ENCODE measurements at regions of chr13 and their contacts with region 1.

Region 1: DNA sequence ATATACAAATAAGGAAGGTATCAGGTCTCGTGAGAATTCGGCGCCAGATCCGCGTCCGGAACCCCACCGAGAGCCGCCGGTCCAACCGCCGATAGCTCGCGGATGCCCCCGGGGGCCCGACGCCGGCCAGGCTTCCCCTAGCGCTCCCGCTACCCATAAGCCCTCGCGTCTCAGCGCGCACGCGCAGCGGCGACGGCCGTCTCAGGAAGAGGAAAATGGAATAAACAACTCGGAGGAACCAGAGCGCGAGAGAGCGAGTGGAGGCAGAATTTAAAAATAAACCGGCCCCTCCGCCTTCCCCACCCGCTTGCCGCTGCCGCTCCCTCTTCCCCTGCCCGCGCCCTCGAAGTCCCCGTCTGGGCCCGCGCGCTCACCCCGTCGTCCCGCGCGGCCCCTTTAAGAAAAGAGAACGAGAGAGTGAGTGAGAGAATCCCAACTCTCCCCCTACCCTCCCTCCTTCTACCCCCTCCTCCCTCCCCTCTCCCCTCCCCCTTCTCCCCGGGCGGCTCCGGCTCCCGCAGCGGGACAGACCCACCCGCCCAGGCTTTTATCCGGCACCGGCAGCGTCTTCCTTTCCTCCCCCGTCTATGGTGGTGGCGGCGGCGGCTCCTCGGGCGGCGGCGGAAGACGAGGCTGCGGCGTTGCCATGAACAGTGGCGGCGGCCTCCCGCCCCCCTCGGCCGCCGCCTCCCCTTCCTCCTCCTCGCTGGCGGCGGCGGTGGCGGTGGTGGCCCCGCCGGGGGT is at the start of gene PAN3:
- DNase-seq: peak; percentile 95
- ATAC-seq: peak; percentile 67
- H3K4me3 Mint-ChIP-seq: peak within 1 kb of the TSS; percentile 95
- H3K27ac Mint-ChIP-seq: peak within 1 kb of the TSS; percentile 98
- H3K4me1 Mint-ChIP-seq: peaks cover 53% of the 10 kb centered on the region
- H3K27me3 Mint-ChIP-seq: no peaks in the 10 kb centered on the region
- CTCF ChIP-seq: no peak
- total RNA-seq, gene PAN3: 60.7 and 68.2 TPM in 2 replicates

Region 2: DNA sequence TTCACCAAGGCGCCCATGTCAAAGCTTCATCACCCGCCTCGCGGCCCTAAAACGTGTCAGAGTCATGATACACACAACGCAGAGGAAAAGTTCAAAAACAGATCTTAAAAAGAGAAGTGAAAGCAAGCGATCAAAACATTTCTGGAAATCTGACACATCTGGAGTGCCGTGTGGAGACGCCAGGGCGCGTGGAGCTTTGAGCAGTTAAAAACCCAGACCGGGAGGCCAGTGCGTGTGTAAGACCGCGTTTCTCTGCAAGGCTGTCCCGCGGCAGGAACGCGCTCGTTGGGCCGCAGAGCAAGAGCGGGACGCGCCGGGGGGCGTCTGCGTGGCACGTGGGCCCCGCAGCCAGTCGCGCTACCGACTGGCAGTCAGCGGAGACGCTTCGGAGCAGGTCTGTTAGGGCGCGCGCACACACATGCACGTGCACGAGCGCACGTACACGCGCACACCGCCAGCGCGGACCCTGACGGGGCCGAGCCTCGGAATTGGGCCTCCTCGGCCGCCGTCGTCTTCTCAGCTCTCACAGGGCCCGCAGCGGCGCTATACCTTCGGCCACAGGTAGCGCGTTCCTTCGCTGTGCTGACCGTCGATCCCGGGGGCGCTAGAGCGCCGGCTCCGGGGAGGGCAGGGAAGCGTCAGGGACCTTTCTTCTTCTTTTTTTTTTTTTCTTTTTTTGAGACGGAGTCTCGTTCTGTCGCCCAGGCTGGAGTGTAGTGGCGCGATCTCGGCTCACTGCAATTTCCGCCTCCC is 1951.9 kb before region 1 on chr13:
- CTCF ChIA-PET with region 1: no interaction called
- POLR2A ChIA-PET with region 1: no interaction called
- intact Hi-C with region 1: loop called (anchors 10 kb)
- DNase-seq: peak; percentile 94
- ATAC-seq: peak; percentile 84
- H3K4me3 Mint-ChIP-seq: peak overlapping the region; percentile 87
- H3K27ac Mint-ChIP-seq: peak overlapping the region; percentile 91
- H3K4me1 Mint-ChIP-seq: peaks cover 48% of the 10 kb centered on the region
- H3K27me3 Mint-ChIP-seq: no peaks in the 10 kb centered on the region
- CTCF ChIP-seq: no peak

Region 3: GRCh38 chr13:27424246-27425157 is 713.7 kb before region 1 on chr13 and contains the start of gene GTF3A:
- CTCF ChIA-PET with region 1: no interaction called
- POLR2A ChIA-PET with region 1: no interaction called
- intact Hi-C with region 1: loop called (anchors 1 kb)
- DNase-seq: peak; percentile 91
- ATAC-seq: peak; percentile 72
- H3K4me3 Mint-ChIP-seq: peak within 1 kb of the TSS; percentile 79
- H3K27ac Mint-ChIP-seq: peak within 1 kb of the TSS; percentile 86
- H3K4me1 Mint-ChIP-seq: peaks cover 42% of the 10 kb centered on the region
- H3K27me3 Mint-ChIP-seq: no peaks in the 10 kb centered on the region
- CTCF ChIP-seq: no peak
- total RNA-seq, gene GTF3A: 119 and 134 TPM in 2 replicates

Region 4: GRCh38 chr13:28012896-28013295 is 125.3 kb before region 1 on chr13:
- CTCF ChIA-PET with region 1: no interaction called
- POLR2A ChIA-PET with region 1: interaction called, 3 read pairs
- intact Hi-C with region 1: loop called (anchors 5 kb)
- DNase-seq: no peak
- ATAC-seq: peak; percentile 80
- H3K4me3 Mint-ChIP-seq: no peak overlapping the region
- H3K27ac Mint-ChIP-seq: peak overlapping the region; percentile 3
- H3K4me1 Mint-ChIP-seq: peaks cover 15% of the 10 kb centered on the region
- H3K27me3 Mint-ChIP-seq: no peaks in the 10 kb centered on the region
- CTCF ChIP-seq: no peak

Region 5: DNA sequence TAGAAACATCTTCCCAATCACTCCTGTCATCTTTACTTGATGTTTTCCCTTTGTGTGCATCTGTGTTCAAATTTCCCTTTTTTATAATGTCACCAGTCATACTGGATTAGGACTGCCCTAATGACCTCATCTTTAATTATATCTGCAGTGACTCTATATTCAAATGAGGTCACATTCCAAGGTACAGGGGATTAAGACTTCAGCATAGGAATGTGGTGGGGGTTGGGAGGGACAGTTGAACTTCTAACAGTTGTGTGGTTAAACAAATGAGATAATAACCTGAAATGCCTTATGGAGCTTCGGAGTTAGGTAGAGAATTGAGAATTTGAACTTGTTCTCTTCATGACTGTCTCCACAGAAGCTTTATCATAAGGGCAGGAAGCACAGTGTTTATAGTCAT is 23.2 kb after region 1 on chr13:
- CTCF ChIA-PET with region 1: no interaction called
- POLR2A ChIA-PET with region 1: interaction called, 3 read pairs
- intact Hi-C with region 1: loop called (anchors 2 kb)
- DNase-seq: no peak
- ATAC-seq: no peak
- H3K4me3 Mint-ChIP-seq: no peak overlapping the region
- H3K27ac Mint-ChIP-seq: no peak overlapping the region
- H3K4me1 Mint-ChIP-seq: peaks cover 68% of the 10 kb centered on the region
- H3K27me3 Mint-ChIP-seq: no peaks in the 10 kb centered on the region
- CTCF ChIP-seq: no peak

Region 6: DNA sequence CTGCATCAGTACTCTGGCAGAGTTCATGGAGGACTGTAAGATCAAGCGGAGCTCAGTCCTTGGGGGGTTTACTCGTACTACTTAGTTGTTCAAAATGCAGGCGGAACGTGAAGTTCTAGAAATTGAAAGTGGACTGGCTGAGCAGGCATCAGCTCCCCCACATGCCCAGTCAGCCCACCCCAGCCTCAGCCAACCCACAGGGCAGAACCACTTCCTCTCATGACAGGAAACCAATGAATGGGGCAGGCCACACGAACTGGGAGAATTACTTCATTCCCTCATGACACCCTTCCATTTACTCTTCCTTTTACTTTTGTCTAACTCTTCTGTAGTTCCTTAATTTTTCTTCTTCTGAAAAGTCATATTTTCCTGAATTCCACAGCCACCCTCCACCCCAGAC is 284.8 kb after region 1 on chr13:
- CTCF ChIA-PET with region 1: no interaction called
- POLR2A ChIA-PET with region 1: no interaction called
- intact Hi-C with region 1: loop called (anchors 5 kb)
- DNase-seq: peak; percentile 48
- ATAC-seq: peak; percentile 99
- H3K4me3 Mint-ChIP-seq: peak overlapping the region; percentile 76
- H3K27ac Mint-ChIP-seq: peak overlapping the region; percentile 85
- H3K4me1 Mint-ChIP-seq: peaks cover 28% of the 10 kb centered on the region
- H3K27me3 Mint-ChIP-seq: no peaks in the 10 kb centered on the region
- CTCF ChIP-seq: no peak

Region 7: DNA sequence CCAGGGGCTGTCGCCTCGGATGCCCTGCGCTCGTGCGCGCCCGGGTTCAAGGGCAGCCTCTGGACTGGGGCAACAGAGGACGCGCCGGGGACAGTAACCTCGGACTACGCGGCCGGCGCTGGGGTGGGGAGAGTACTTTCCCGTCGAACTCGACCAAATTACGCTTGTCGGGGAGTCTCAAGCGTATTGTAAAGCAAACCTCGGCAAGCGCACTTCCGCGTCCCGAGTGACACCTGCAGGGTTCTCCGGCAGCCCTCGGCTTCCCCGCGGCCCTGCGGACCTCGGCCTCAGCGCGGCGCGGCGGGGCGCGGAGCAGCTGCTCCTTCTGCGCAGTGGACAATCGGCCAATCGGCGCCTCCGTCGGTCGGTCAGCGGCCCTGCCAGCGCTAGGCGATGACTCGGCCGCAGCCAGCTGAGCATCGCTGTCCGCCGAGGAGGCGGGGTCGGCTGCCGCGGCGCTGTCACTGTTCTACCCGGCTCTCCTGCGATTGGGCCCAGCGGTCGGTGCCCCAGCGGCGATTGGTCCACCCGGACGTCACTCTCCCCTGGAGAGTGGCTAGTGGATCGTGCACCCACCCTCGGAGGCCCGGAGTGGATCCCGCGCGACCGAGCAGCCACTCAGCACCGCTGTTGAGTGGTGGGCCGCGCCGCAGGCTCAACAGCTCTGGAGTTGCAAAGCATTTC is 580.5 kb after region 1 on chr13 and contains the start of gene SLC46A3:
- CTCF ChIA-PET with region 1: no interaction called
- POLR2A ChIA-PET with region 1: no interaction called
- intact Hi-C with region 1: loop called (anchors 1 kb)
- DNase-seq: peak; percentile 95
- ATAC-seq: peak; percentile 98
- H3K4me3 Mint-ChIP-seq: peak within 1 kb of the TSS; percentile 92
- H3K27ac Mint-ChIP-seq: peak within 1 kb of the TSS; percentile 92
- H3K4me1 Mint-ChIP-seq: peaks cover 23% of the 10 kb centered on the region
- H3K27me3 Mint-ChIP-seq: no peaks in the 10 kb centered on the region
- CTCF ChIP-seq: no peak
- total RNA-seq, gene SLC46A3: 8.6 and 11.8 TPM in 2 replicates

Measured in activated B cell treated with CpG ODN at 0.5 μM for 24 hours (primary cell).